HepG2 (cell line): ENCODE measurements at regions of chr7 and their contacts with region 1.

Region 1: DNA sequence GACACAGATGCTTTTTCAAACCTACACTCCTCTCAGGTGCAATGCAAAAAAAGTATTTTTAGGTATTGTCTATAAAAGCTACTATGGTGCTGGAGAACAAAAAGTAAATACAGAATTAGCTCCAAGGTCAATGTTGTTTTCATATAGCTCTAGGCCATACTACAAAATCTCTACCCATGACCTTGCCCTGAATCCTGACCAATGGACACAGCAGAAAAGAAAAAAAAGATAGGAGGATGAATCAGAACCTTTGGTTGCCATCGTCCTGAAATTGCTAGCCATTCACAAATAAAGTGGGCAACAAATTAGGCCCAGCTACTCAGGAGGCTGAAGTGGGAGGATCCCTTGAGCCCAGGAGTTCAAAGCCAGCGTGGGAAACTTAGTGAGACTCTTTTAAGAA is 35.2 kb upstream of the RELN start:
- DNase-seq: peak; percentile 56
- ATAC-seq: peak; percentile 41; the same call in 1 of the 3 replicates
- H3K4me3 ChIP-seq: no peak overlapping the region
- H3K27ac ChIP-seq: no peak overlapping the region
- H3K4me1 ChIP-seq: peaks cover 64% of the 10 kb centered on the region
- H3K27me3 ChIP-seq: no peaks in the 10 kb centered on the region
- CTCF ChIP-seq: no peak
- EP300 ChIP-seq: peak in 1 of 2 experiments; percentile 32; a peak in 1 of 4 replicates
- POLR2A ChIP-seq: no peak
- RAD21 ChIP-seq: no peak

Region 2: DNA sequence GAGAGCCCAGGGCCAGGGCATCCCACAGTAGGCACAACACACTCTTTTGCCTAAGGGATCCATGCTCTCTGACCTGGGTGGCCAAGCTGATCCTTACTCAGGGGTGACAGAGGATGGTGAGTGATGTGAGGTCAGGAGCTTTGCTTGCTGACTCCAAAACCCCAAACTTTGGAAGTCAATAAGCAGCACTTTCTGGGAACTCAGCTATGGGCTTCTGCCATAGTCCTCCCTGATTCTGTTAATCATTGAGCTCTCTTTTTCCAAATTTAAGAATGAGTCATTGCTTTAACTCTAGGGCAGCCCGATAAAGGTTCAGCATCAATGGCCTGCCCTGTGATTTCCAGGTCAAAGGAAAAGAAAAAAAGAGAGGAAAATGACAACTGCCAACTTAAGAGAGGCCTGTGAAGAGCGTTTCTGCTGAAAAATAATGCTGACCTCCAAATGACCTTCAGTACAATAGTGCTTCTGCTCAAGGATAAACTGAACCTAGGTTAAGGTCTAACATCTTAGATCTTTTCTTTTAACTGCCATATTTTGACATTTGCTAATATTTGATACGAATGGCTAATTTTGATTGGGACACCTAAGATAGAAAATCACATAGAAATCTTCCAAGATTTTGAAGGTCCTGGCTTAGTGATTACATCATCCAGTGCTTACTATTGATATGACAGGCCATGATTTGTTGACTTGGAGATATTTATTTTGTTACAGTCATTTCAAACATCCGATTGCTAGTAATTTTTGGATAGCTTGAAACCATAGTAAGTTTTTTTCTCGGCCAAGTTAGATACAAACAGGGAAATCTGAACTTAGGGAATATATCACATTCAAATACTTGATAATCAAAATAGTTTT is 14.4 kb before region 1 on chr7:
- CTCF ChIA-PET with region 1: no interaction called
- POLR2A ChIA-PET with region 1: interaction called, 13 read pairs
- in situ Hi-C with region 1: no loop called
- intact Hi-C with region 1: no loop called
- DNase-seq: peak; percentile 81
- ATAC-seq: peak; percentile 96
- H3K4me3 ChIP-seq: peak overlapping the region in 1 of 3 experiments; percentile 6; a peak in 1 of 6 replicates
- H3K27ac ChIP-seq: peak overlapping the region; percentile 44
- H3K4me1 ChIP-seq: peaks cover 52% of the 10 kb centered on the region
- H3K27me3 ChIP-seq: no peaks in the 10 kb centered on the region
- CTCF ChIP-seq: 0 out of 2 replicates have a peak, but pooled peaks have one; percentile 6
- EP300 ChIP-seq: peak in 1 of 2 experiments; percentile 42; a peak in 2 of 4 replicates
- POLR2A ChIP-seq: no peak
- RAD21 ChIP-seq: no peak